ENCODE measurements at regions of chr3 and their contacts with region 1.

Region 1: GRCh38 chr3:46705022-46705530 is 3.9 kb downstream of the TMIE start:
- DNase-seq: peak; percentile 56
- H3K4me3 Mint-ChIP-seq: no peak overlapping the region
- H3K27ac Mint-ChIP-seq: no peak overlapping the region
- H3K4me1 Mint-ChIP-seq: peaks cover 1% of the 10 kb centered on the region
- H3K27me3 Mint-ChIP-seq: peaks cover 19% of the 10 kb centered on the region

Region 2: GRCh38 chr3:46186471-46187340 is 518.4 kb before region 1 on chr3:
- intact Hi-C with region 1: no loop called
- DNase-seq: no peak
- H3K4me3 Mint-ChIP-seq: no peak overlapping the region
- H3K27ac Mint-ChIP-seq: no peak overlapping the region
- H3K4me1 Mint-ChIP-seq: peaks cover 14% of the 10 kb centered on the region
- H3K27me3 Mint-ChIP-seq: peaks cover 32% of the 10 kb centered on the region

Region 3: DNA sequence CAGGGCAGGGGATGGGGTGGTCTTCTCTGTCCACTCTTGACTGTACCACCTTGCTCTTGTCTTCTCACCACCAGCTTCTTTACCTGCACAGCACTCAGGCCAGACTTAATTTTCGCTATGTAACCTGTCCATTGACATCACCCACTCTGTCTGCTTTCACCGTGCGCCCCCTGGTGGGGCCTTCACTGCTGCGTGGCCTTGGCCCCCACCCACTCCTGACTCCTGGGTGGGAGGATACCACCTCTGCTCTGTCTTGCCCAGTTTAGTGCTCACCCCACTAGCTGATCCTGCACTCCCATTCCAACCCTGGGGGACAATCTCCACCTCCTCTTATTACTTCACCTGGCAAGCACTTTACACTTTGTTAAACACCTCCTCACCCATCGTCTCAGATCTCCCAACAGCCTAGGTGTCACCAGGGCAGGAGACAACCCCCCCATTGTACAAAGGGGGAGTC is 190.2 kb after region 1 on chr3:
- intact Hi-C with region 1: loop called (anchors 1 kb)
- DNase-seq: peak; percentile 52
- H3K4me3 Mint-ChIP-seq: no peak overlapping the region
- H3K27ac Mint-ChIP-seq: no peak overlapping the region
- H3K4me1 Mint-ChIP-seq: no peaks in the 10 kb centered on the region
- H3K27me3 Mint-ChIP-seq: peaks cover 48% of the 10 kb centered on the region

Region 4: DNA sequence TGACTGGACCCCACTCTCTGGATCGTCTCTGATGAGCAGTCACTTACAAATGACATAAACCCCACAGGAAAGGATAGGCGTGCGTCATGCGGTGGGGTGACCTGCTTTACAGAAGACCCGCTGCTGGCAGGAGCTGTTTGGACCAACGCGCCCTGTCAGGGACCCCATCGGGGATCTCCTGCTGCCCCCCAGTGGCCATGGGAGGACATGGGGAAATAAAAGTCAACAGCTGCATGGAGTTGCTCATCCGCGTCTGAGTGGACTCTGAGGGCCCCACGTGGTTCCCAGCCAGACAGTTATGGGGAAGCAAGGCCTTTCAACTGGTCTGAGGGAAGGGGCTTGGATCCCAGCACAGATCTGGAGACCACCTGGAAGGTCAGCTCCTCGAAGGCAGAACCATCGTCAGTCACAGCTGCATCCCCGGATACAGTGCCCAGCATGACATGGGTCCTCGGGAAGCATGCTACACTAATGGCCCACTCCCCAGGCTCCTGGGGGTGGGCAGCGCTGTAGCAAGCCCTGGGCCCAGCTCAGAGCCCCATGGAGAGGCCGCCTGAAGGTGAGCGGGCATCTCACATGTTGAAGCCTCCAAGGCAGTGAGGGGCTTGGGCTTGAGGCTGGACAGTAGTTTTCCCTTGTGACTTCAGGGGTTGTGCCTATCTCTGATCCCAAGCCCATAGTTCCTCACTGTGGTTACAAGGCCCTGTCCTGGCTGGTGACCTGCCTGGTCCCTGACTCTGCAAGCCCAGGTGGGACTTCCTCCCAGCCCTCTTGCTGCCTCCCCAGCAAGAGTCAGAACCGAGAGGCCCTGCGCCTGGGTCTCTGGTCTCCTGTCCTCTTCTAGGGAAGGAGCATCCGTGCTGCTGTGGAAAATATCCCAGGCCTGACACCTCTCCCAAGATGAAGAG is 204.7 kb after region 1 on chr3:
- intact Hi-C with region 1: loop called (anchors 1 kb)
- DNase-seq: peak; percentile 66
- H3K4me3 Mint-ChIP-seq: no peak overlapping the region
- H3K27ac Mint-ChIP-seq: no peak overlapping the region
- H3K4me1 Mint-ChIP-seq: peaks cover 15% of the 10 kb centered on the region
- H3K27me3 Mint-ChIP-seq: no peaks in the 10 kb centered on the region

Region 5: DNA sequence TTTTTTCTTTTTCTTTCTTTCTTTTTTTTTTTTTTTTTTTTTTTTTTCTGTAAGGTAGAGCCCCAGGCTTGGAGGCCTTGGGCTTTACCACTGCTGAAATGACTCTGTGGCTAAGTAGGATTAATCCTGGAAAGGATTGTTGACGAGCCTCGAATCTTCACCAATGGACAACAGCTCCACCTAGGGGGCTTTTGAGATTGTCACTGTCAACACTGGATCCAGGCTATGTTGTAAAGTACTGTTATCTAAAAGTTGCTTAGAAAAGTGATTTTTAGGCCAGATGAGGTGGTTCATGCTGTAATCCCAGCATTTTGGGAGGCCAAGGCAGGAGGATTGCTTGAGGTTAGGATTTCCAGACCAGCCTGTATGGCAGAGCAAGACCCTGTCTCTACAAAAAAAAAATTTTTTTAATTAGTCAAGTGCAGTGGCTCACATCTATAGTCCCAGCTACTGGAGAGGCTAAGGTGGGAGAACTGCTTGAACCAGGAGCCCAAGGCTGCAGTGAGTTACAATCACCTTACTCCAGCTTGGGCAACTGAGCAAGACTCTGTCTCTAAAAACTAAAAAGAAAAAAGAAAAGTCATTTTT is 619.3 kb after region 1 on chr3:
- intact Hi-C with region 1: loop called (anchors 5 kb)
- DNase-seq: peak; percentile 36
- H3K4me3 Mint-ChIP-seq: no peak overlapping the region
- H3K27ac Mint-ChIP-seq: no peak overlapping the region
- H3K4me1 Mint-ChIP-seq: peaks cover 3% of the 10 kb centered on the region
- H3K27me3 Mint-ChIP-seq: no peaks in the 10 kb centered on the region

Measured in activated T-helper 2 cell treated with anti-CD3 and anti-CD28 coated beads, Interferon-gamma antibody, Interleukin-2, Interleukin-4, amounts not matched to agents 10 μg/mL and 5 μg/mL and 100 μg/mL, durations not matched to agents 14 hours and 24 hours and 36 hours (primary cell).